Endothelial cell of umbilical vein (primary cell): ENCODE measurements at regions of chr2 and their contacts with region 1.

Region 1: GRCh38 chr2:144937910-144938709 is 418.2 kb upstream of the ZEB2 start:
- DNase-seq: peak; percentile 92
- H3K4me3 ChIP-seq: no peak overlapping the region
- H3K27ac ChIP-seq: peak overlapping the region; percentile 59
- H3K4me1 ChIP-seq: peaks cover 40% of the 10 kb centered on the region
- H3K27me3 ChIP-seq: no peaks in the 10 kb centered on the region
- CTCF ChIP-seq: no peak
- POLR2A ChIP-seq: no peak

Region 2: GRCh38 chr2:144350151-144350802 is 587.8 kb before region 1 on chr2:
- CTCF ChIA-PET with region 1: no interaction called
- POLR2A ChIA-PET with region 1: no interaction called
- dilution Hi-C with region 1: no loop called
- intact Hi-C with region 1: loop called (anchors 5 kb)
- DNase-seq: peak; percentile 99
- H3K4me3 ChIP-seq: peak overlapping the region in 2 of 3 experiments; percentile 0 to 9
- H3K27ac ChIP-seq: peak overlapping the region; percentile 79
- H3K4me1 ChIP-seq: peaks cover 32% of the 10 kb centered on the region
- H3K27me3 ChIP-seq: no peaks in the 10 kb centered on the region
- CTCF ChIP-seq: no peak
- POLR2A ChIP-seq: no peak

Region 3: DNA sequence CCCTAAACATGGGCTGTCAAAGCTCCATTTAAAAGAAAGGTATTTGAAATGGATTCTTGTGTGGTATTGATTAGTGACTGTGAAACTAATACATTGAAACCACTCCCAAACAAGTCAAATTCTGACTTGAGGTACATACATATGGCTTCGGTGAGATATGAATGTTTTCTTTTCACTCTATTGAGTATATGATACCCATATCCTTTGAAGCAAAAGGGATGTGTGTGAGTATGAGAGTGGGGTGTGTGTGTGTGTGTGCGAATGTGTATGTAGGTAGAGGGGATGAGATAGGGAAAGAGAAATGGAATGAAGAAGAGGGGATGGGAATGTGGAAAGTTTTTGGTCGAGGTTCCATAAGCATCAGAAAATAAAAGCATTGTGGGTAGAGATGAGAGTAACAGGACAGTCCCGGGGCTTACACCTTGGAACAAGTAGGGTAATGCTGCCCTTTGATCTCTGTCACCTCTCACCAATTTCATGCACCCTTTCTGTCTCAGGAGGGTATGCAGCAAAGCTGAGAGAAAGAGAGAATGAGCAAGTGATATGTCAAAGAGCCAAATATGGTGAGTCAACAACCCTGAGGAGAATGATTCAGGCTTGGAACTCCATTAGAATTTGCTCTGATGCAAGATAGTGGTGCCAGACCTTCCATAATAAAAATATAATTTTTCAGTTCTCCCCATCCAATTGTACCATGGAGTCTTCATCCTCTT is 354.2 kb before region 1 on chr2:
- CTCF ChIA-PET with region 1: no interaction called
- POLR2A ChIA-PET with region 1: no interaction called
- dilution Hi-C with region 1: no loop called
- intact Hi-C with region 1: loop called (anchors 5 kb)
- DNase-seq: peak; percentile 43
- H3K4me3 ChIP-seq: no peak overlapping the region
- H3K27ac ChIP-seq: no peak overlapping the region
- H3K4me1 ChIP-seq: peaks cover 37% of the 10 kb centered on the region
- H3K27me3 ChIP-seq: no peaks in the 10 kb centered on the region
- CTCF ChIP-seq: no peak
- POLR2A ChIP-seq: no peak

Region 4: DNA sequence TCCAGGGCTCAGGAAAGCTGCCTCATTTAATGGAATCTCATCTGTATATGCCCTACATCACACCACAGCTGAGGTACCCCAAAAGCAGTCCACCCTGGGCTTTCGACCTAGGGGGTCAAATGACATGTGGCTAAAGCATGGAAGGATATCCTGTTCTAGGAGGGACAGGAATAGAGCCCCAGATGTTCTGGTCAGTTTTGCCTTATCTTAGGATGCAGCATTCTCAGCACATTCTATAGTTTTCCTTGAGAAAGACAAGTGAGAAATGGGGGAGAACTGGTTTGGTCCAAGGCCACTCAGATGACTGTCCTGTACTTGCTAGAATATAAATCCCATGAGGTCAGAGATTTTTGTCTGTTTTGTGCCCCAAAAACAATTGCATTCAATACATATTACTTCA is 269.8 kb after region 1 on chr2:
- CTCF ChIA-PET with region 1: no interaction called
- POLR2A ChIA-PET with region 1: no interaction called
- dilution Hi-C with region 1: no loop called
- intact Hi-C with region 1: loop called (anchors 5 kb)
- DNase-seq: peak; percentile 94
- H3K4me3 ChIP-seq: no peak overlapping the region
- H3K27ac ChIP-seq: peak overlapping the region; percentile 23
- H3K4me1 ChIP-seq: peaks cover 14% of the 10 kb centered on the region
- H3K27me3 ChIP-seq: no peaks in the 10 kb centered on the region
- CTCF ChIP-seq: no peak
- POLR2A ChIP-seq: no peak

Region 5: DNA sequence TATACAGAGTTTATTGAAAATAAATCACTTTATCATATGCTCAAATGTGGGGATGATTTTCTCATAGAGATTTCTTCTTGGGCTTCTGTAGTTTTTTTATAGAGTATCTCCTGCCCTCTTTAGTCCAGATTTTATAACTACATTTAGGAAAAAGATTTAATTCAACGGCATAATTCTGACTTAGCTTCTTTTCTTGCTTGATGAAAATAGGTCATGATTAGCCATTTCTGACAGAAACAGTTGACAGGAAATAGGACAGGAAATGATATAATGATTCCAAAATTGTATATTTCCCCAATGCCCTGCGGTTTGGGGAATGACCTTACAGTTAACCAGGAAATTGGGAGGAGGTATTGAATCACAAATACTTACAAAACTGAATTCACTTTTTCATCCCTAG is 1374.8 kb after region 1 on chr2:
- CTCF ChIA-PET with region 1: no interaction called
- POLR2A ChIA-PET with region 1: no interaction called
- dilution Hi-C with region 1: no loop called
- intact Hi-C with region 1: loop called (anchors 10 kb)
- DNase-seq: peak; percentile 65
- H3K4me3 ChIP-seq: no peak overlapping the region
- H3K27ac ChIP-seq: peak overlapping the region; percentile 40
- H3K4me1 ChIP-seq: peaks cover 14% of the 10 kb centered on the region
- H3K27me3 ChIP-seq: no peaks in the 10 kb centered on the region
- CTCF ChIP-seq: no peak
- POLR2A ChIP-seq: no peak